ENCODE measurements at regions of chr7 and their contacts with region 1.

Region 1: GRCh38 chr7:31443457-31443856 is 70.4 kb upstream of the ITPRID1 start:
- DNase-seq: peak; percentile 57
- H3K4me3 Mint-ChIP-seq: no peak overlapping the region
- H3K27ac Mint-ChIP-seq: no peak overlapping the region
- H3K4me1 Mint-ChIP-seq: no peaks in the 10 kb centered on the region
- H3K27me3 Mint-ChIP-seq: peaks cover 28% of the 10 kb centered on the region
- CTCF ChIP-seq: peak; percentile 72

Region 2: GRCh38 chr7:30650421-30650808 is 793.0 kb before region 1 on chr7:
- CTCF ChIA-PET with region 1: no interaction called
- POLR2A ChIA-PET with region 1: no interaction called
- intact Hi-C with region 1: no loop called
- DNase-seq: no peak
- H3K4me3 Mint-ChIP-seq: no peak overlapping the region
- H3K27ac Mint-ChIP-seq: no peak overlapping the region
- H3K4me1 Mint-ChIP-seq: no peaks in the 10 kb centered on the region
- H3K27me3 Mint-ChIP-seq: no peaks in the 10 kb centered on the region
- CTCF ChIP-seq: no peak

Region 3: GRCh38 chr7:31192986-31193385 is 250.5 kb before region 1 on chr7:
- CTCF ChIA-PET with region 1: interaction called, 9 read pairs
- POLR2A ChIA-PET with region 1: no interaction called
- intact Hi-C with region 1: loop called (anchors 5 kb)
- DNase-seq: peak; percentile 64
- H3K4me3 Mint-ChIP-seq: no peak overlapping the region
- H3K27ac Mint-ChIP-seq: no peak overlapping the region
- H3K4me1 Mint-ChIP-seq: no peaks in the 10 kb centered on the region
- H3K27me3 Mint-ChIP-seq: peaks cover 22% of the 10 kb centered on the region
- CTCF ChIP-seq: peak; percentile 67

Region 4: DNA sequence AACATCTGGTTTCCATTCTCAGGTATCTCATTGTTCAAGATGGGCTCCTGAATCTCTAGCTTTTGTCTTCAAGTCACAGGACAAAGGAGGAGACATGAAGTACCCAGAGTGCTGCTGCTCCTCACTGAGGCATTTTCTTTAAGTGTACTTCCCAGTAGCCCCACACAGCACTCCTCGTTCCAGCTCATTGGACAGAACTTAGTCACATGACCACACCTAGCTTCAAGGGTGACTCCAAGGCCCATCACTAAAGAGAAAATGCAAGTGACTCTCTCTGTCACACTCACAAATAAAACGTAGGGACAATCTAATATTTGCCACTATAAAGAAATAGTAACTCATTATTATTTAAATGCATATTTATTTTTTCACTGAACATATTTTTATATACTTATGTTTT is 44.6 kb before region 1 on chr7:
- CTCF ChIA-PET with region 1: interaction called, 11 read pairs
- POLR2A ChIA-PET with region 1: no interaction called
- intact Hi-C with region 1: no loop called
- DNase-seq: no peak
- H3K4me3 Mint-ChIP-seq: no peak overlapping the region
- H3K27ac Mint-ChIP-seq: no peak overlapping the region
- H3K4me1 Mint-ChIP-seq: no peaks in the 10 kb centered on the region
- H3K27me3 Mint-ChIP-seq: no peaks in the 10 kb centered on the region
- CTCF ChIP-seq: no peak

Region 5: DNA sequence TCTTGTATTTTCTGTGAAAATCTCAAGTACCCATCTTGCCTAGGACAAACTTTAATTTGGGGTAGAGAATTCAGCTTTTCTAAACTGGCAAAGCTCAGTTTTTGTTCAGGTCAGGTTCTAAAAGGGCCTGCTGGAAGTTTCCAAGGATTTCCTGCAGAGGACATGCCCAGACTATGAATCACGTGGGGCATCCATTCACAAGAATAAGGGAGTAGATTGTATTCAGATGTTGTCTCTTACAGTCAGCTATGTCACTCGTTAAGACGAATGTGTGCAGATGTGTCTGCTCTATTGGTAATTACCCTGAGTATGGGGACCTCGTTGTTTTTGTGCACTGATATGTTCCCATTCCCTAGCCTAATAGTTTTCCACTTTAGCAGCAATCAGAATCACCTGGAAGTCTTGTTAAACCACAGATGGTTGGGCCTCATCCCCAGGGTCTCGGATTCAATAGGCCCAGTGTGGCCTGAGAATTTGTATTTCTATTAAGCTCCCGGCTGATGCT is 10.6 kb before region 1 on chr7:
- CTCF ChIA-PET with region 1: interaction called, 17 read pairs
- POLR2A ChIA-PET with region 1: no interaction called
- intact Hi-C with region 1: no loop called
- DNase-seq: no peak
- H3K4me3 Mint-ChIP-seq: no peak overlapping the region
- H3K27ac Mint-ChIP-seq: no peak overlapping the region
- H3K4me1 Mint-ChIP-seq: no peaks in the 10 kb centered on the region
- H3K27me3 Mint-ChIP-seq: peaks cover 16% of the 10 kb centered on the region
- CTCF ChIP-seq: no peak

Region 6: DNA sequence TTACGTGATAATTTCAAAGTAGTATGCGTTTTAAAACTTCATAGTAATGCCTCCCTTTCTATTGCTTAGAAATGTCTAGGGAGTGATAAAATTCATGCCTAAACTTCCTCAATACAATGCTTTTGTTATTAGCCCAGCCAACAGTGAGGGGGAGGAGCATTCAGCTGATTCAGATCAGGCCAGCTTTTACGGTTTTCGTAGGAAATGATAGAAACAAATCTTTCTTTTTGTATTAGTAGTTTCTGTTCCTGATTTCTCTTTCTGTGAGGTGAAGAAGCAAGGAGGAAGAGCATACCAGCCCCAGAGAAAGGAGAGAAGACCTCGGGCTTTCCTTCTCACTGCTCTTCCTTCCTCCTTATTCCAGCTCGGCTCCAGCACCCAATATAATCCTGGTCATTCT is 35.3 kb after region 1 on chr7:
- CTCF ChIA-PET with region 1: interaction called, 18 read pairs
- POLR2A ChIA-PET with region 1: no interaction called
- intact Hi-C with region 1: no loop called
- DNase-seq: no peak
- H3K4me3 Mint-ChIP-seq: no peak overlapping the region
- H3K27ac Mint-ChIP-seq: no peak overlapping the region
- H3K4me1 Mint-ChIP-seq: no peaks in the 10 kb centered on the region
- H3K27me3 Mint-ChIP-seq: peaks cover 19% of the 10 kb centered on the region
- CTCF ChIP-seq: no peak

Region 7: GRCh38 chr7:31633894-31634494 is 190.5 kb after region 1 on chr7:
- CTCF ChIA-PET with region 1: interaction called, 50 read pairs
- POLR2A ChIA-PET with region 1: no interaction called
- intact Hi-C with region 1: loop called (anchors 1 kb)
- DNase-seq: peak; percentile 67
- H3K4me3 Mint-ChIP-seq: no peak overlapping the region
- H3K27ac Mint-ChIP-seq: no peak overlapping the region
- H3K4me1 Mint-ChIP-seq: no peaks in the 10 kb centered on the region
- H3K27me3 Mint-ChIP-seq: no peaks in the 10 kb centered on the region
- CTCF ChIP-seq: peak; percentile 76

Region 8: DNA sequence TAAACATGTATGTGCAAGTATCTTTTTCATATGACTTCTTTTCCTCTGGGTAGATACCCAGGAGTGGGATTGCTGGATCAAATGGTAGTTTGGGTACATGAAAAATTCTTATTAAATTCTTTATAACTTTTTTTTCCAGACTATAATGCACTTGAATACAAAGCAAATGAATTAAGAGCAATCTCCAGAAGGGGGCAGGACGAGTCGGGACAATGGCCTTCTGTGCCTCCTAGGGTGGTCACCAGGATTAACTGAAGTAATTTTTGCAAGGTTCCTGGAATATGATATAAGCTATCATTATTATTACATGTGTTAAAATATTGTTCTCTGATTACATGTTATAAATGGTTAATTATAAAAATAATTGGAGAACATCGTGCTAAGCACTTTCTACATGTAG is 370.7 kb after region 1 on chr7:
- CTCF ChIA-PET with region 1: no interaction called
- POLR2A ChIA-PET with region 1: no interaction called
- intact Hi-C with region 1: no loop called
- DNase-seq: peak; percentile 26
- H3K4me3 Mint-ChIP-seq: no peak overlapping the region
- H3K27ac Mint-ChIP-seq: no peak overlapping the region
- H3K4me1 Mint-ChIP-seq: no peaks in the 10 kb centered on the region
- H3K27me3 Mint-ChIP-seq: no peaks in the 10 kb centered on the region
- CTCF ChIP-seq: peak; percentile 14